HAP-1 (cell line): ENCODE measurements at regions of chr19 and their contacts with region 1.

Region 1: DNA sequence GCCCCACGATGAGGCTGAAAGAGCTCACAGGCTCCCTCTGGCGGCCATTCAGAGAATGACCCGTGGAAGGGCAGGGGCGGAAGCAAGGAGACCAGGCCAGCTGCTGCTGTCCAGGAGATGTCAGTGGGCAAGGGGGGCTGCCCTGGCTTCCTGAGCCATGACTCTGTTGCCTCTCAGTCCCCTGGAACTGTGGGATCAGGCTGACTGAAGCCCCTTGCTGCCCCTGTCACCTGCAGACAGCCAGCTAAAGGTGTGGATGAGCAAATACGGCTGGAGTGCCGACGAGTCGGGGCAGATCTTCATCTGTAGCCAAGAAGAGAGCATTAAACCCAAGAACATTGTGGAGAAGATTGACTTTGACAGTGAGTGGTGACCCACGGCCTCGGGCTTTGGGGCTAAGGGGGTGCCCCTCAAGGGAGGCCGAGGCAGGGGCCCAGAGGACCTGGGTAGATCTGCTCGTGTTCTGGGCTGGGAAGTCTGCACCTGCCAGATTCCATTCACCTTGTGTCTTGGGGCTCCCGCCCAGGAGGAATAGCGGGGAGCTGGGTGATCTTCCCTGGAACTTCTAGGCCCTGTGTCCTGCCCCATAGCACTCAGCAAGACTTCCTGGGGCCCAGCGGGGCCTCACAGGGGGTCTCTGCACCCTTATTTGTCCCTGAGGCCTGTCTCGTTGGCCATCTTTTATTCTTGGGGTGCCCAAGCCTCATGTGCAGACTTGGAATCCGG is 12.5 kb upstream of the ACTN4 start:
- DNase-seq: peak in 1 of 2 experiments; percentile 85
- H3K4me3 ChIP-seq: no peak overlapping the region
- H3K4me1 ChIP-seq: peaks cover 10% of the 10 kb centered on the region
- H3K27me3 ChIP-seq: no peaks in the 10 kb centered on the region

Region 2: DNA sequence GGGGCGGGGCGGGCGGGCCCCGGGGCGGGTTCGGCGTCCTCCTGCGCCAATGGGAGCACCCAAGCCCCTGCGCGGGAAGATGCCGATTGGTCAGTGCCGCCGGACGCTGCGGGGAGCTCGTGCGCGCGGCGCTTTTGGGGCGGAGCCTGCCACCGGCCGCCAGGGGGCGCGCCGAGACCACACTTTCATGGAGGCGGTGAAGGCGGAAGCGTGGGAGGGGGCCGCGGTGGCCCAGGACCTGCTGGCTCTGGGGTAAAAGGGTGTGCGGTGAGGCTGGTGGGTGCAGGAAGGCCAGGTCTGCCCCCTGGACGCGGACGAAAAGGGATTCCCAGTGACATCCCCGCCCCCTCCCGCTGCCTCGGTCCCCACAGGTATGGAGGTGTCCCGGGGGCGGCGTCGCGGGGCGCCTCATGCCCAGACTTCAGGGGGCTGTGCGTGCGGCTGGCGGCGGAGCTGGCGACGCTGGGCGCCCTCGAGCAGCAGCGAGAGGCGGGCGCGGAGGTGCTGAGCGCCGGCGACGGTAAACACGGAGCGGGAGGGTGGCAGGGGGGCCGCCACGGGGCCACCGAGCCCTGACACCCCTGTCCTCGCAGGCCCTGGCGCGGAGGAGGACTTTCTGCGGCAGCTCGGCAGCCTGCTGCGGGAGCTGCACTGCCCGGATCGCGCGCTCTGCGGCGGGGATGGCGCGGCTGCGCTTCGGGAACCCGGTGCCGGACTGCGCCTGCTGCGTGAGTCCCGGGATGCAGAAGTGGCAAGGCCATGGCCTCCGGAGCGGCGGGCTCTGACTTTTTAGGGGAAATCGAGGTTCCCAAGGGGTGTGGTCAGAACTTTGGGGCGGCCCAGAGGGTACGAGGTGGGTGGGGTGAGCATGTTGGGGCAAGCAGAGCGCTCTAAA is 231.7 kb before region 1 on chr19 and contains the start of gene FAM98C:
- in situ Hi-C with region 1: loop called (anchors 10 kb)
- DNase-seq: peak; percentile 94 to 98
- H3K4me3 ChIP-seq: peak within 1 kb of the TSS; percentile 76
- H3K4me1 ChIP-seq: no peaks in the 10 kb centered on the region; the same call in none of the 2 replicates
- H3K27me3 ChIP-seq: no peaks in the 10 kb centered on the region

Region 3: DNA sequence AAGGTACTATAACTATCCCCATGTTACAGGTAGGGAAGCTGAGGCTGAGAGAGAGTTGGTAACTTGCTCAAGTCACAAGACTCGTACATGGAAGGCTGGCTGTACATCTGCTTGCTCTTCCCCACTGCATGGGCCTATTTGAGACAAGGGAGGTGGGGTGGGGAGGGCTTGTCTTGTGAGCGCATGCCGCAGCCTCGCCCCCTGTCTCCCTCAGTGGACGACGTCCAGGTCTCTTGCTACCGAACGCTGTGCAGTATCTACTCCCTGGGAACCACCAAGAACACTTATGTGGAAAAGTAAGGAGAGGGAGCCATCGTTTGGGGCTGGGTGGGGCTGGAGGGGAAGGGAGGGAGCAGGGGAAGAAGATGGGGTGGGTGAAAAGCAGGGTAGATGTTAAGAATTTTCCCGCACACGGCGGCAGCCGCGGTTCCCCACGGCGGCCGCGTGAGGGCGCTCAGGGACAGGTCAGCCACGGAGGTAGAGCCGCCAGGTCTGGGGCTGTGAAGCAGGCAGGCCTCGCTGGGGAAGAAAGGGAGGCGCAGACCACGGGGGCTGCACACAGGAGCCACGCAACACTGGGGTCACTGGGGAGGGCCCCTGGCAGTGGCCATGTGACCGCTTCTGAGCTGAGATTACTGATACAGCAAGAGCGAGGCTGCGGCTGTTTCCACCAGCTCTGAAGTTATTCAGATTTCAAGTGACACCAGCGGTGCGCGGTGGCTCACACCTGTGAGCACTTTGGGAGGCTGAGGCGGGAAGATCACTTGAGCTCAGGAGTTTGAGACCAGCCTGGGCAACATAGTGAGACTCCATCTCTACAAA is 119.9 kb before region 1 on chr19:
- in situ Hi-C with region 1: loop called (anchors 5 kb)
- DNase-seq: peak; percentile 62 to 87
- H3K4me3 ChIP-seq: no peak overlapping the region
- H3K4me1 ChIP-seq: peaks cover 4% of the 10 kb centered on the region
- H3K27me3 ChIP-seq: no peaks in the 10 kb centered on the region; the same call in 1 of the 2 replicates